ENCODE measurements at regions of chr19 and their contacts with region 1.

Region 1: GRCh38 chr19:18985257-18985656 is 44.2 kb upstream of the HOMER3 start:
- DNase-seq: no peak
- ATAC-seq: no peak
- H3K4me3 ChIP-seq: no peak overlapping the region
- H3K27ac ChIP-seq: no peak overlapping the region
- H3K4me1 ChIP-seq: no peaks in the 10 kb centered on the region
- CTCF ChIP-seq: no peak
- EP300 ChIP-seq: no peak
- POLR2A ChIP-seq: no peak
- RAD21 ChIP-seq: no peak

Region 2: GRCh38 chr19:18895038-18895823 is 90.0 kb before region 1 on chr19:
- CTCF ChIA-PET with region 1: interaction called, 46 read pairs
- POLR2A ChIA-PET with region 1: no interaction called
- DNase-seq: peak; percentile 66 to 74
- ATAC-seq: peak; percentile 72 to 87
- H3K4me3 ChIP-seq: peak overlapping the region; percentile 76
- H3K27ac ChIP-seq: peak overlapping the region; percentile 66 to 83; a peak in 5 of 6 replicates
- H3K4me1 ChIP-seq: peaks cover 11% of the 10 kb centered on the region; the same call in 2 of the 3 replicates
- CTCF ChIP-seq: peak; percentile 48; the same call in 2 of the 3 replicates
- EP300 ChIP-seq: no peak
- POLR2A ChIP-seq: no peak
- RAD21 ChIP-seq: peak; percentile 38 to 45; a peak in 4 of 5 replicates

Region 3: DNA sequence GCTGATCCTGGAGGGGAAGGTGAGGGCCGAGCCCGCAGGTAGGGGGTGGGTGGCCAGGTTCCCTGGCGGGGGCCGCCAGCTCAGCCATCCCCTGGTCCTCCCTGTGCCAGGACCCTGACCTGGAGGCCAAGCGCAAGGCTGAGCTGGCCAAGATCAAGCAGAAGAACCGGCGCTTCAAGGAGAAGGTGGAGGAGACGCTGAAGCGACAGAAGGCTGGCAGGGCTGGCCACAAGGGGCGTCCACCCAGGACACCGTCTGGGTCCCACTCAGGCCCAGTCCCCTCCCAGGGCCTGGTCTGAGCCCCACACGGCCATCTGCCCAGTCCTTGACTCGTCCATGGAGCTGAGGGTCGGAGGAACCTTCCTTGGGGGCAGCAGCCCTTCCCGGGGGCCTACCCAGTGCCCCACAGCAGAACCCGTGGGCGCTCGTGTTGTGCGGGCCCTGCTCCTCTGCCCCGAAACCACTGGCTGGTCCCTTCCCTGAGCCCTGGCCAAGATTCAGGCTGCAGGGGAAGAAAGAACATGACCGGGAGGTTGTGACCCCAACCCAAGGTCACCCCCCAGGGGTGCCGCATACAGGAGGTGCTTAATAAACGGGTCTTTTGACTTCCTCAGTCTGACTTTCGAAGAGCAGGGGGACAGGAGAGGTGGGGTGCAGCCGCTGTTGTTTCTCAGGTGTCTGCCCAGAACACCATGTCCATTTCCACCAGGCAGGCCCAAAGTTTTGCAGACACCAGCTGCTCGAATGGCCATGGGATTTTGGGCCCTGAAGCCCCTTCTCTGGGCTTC is 57.0 kb before region 1 on chr19:
- CTCF ChIA-PET with region 1: interaction called, 14 read pairs
- POLR2A ChIA-PET with region 1: no interaction called
- DNase-seq: no peak
- ATAC-seq: no peak
- H3K4me3 ChIP-seq: no peak overlapping the region
- H3K27ac ChIP-seq: no peak overlapping the region
- H3K4me1 ChIP-seq: no peaks in the 10 kb centered on the region
- CTCF ChIP-seq: no peak
- EP300 ChIP-seq: no peak
- POLR2A ChIP-seq: no peak
- RAD21 ChIP-seq: no peak

Region 4: GRCh38 chr19:18951665-18952281 is 33.5 kb before region 1 on chr19:
- CTCF ChIA-PET with region 1: interaction called, 26 read pairs
- POLR2A ChIA-PET with region 1: no interaction called
- DNase-seq: peak in 1 of 2 experiments; percentile 24
- ATAC-seq: peak; percentile 47 to 54; a peak in 2 of 6 replicates
- H3K4me3 ChIP-seq: no peak overlapping the region
- H3K27ac ChIP-seq: peak overlapping the region in 1 of 2 experiments; percentile 45; a peak in 1 of 6 replicates
- H3K4me1 ChIP-seq: 0 out of 3 replicates have a peak, but pooled peaks cover 2% of the 10 kb centered on the region
- CTCF ChIP-seq: no peak
- EP300 ChIP-seq: no peak
- POLR2A ChIP-seq: no peak
- RAD21 ChIP-seq: no peak

Region 5: GRCh38 chr19:18995804-18996241 is 10.6 kb after region 1 on chr19:
- CTCF ChIA-PET with region 1: interaction called, 44 read pairs
- POLR2A ChIA-PET with region 1: interaction called, 3 read pairs
- DNase-seq: peak; percentile 64 to 65
- ATAC-seq: peak; percentile 87 to 95
- H3K4me3 ChIP-seq: no peak overlapping the region
- H3K27ac ChIP-seq: no peak overlapping the region
- H3K4me1 ChIP-seq: no peaks in the 10 kb centered on the region
- CTCF ChIP-seq: peak; percentile 39
- EP300 ChIP-seq: no peak
- POLR2A ChIP-seq: no peak
- RAD21 ChIP-seq: peak; percentile 24 to 28; a peak in 2 of 5 replicates